Activated CD4-positive, alpha-beta T cell treated with anti-CD3 and anti-CD28 coated beads for 36 hours (primary cell): ENCODE measurements at regions of chr22 and their contacts with region 1.

Region 1: GRCh38 chr22:21666786-21667185 is 974 bp downstream of the PPIL2 start:
- DNase-seq: no peak
- ATAC-seq: no peak
- H3K4me3 Mint-ChIP-seq: peak overlapping the region; percentile 93
- H3K27ac Mint-ChIP-seq: peak overlapping the region; percentile 96
- H3K4me1 Mint-ChIP-seq: peaks cover 27% of the 10 kb centered on the region
- H3K27me3 Mint-ChIP-seq: no peaks in the 10 kb centered on the region

Region 2: DNA sequence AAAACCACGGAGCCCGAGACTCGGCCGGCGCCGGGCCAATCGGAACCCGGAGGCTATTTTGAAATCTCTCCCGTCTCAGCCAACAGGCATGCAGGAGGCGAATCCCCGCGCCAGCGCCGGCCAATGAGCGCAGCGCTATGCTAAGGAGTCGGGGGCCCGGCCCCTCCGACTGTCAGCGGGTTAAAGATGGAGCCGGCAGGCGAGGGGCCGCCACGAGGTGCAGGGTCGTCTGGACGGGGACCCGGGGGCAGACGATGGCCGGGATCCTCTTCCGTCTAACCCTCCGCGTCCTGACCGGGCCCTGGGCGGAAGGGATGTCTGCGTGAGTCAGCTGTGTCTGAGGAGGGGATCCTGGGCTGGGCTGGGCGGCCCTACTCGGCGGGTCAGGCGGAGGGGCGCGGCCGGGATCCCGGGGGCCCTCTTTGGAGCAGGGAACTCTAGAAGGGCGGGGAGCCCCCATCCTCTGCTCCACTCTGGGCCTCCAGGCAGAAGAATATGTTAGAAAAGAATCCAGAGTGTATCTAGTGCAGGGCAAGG is 14.7 kb before region 1 on chr22:
- CTCF ChIA-PET with region 1: interaction called, 10 read pairs
- POLR2A ChIA-PET with region 1: interaction called, 3 read pairs
- intact Hi-C with region 1: loop called (anchors 1 to 2 kb)
- DNase-seq: peak; percentile 95
- ATAC-seq: peak; percentile 97
- H3K4me3 Mint-ChIP-seq: peak overlapping the region; percentile 85
- H3K27ac Mint-ChIP-seq: peak overlapping the region; percentile 86
- H3K4me1 Mint-ChIP-seq: peaks cover 23% of the 10 kb centered on the region
- H3K27me3 Mint-ChIP-seq: no peaks in the 10 kb centered on the region

Region 3: DNA sequence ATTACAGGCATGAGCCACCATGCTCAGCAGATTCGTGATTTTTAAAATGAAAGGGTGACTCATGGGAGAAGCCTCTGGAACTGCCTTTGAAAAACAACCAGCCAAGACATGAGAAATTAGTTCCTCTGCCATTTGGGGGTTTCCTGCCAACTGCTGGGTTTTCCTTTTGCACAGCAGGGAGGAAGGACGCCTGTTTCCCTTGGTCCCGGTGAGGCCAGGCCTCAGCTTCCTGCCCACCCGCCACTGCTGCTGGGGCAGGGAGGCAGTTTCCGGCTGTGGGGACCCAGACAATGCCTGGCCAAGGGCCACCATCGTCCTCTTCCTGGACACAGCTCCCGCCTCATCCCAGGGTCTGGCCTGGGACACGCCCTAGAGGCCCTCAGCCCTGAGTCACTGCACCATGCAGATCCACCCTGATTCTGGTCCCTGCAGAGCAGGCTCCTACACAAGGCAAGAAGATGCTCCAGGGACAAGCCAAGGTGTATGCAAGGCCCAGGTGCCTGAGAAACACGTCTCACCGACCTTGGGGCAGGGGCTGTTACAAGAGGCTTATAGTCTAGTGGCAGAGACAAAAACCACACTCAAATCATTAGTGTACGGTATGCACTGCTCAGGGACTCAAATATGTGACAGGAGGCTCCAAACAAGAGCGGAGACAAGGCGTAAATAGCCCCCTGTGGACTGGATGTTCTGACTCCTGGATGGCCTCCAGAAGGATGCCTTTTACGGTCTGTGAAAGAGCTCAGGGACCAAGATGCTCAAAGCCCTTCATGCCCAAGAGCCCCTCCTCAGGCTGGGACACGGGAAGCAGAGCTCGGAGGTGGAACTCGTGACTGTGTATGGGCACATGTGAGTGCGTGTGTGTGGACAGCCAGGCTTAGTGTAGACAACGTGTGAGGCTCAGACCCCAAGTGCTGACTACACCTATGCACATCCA is 275.9 kb after region 1 on chr22:
- CTCF ChIA-PET with region 1: no interaction called
- POLR2A ChIA-PET with region 1: no interaction called
- intact Hi-C with region 1: no loop called
- DNase-seq: peak; percentile 54
- ATAC-seq: peak; percentile 39
- H3K4me3 Mint-ChIP-seq: no peak overlapping the region
- H3K27ac Mint-ChIP-seq: peak overlapping the region; percentile 74
- H3K4me1 Mint-ChIP-seq: peaks cover 42% of the 10 kb centered on the region
- H3K27me3 Mint-ChIP-seq: no peaks in the 10 kb centered on the region

Region 4: GRCh38 chr22:22235558-22235957 is 568.8 kb after region 1 on chr22:
- CTCF ChIA-PET with region 1: no interaction called
- POLR2A ChIA-PET with region 1: no interaction called
- intact Hi-C with region 1: no loop called
- DNase-seq: peak; percentile 81
- ATAC-seq: peak; percentile 66
- H3K4me3 Mint-ChIP-seq: no peak overlapping the region
- H3K27ac Mint-ChIP-seq: peak overlapping the region; percentile 0
- H3K4me1 Mint-ChIP-seq: peaks cover 3% of the 10 kb centered on the region
- H3K27me3 Mint-ChIP-seq: peaks cover 3% of the 10 kb centered on the region